PC-9 (cell line): ENCODE measurements at regions of chr12 and their contacts with region 1.

Region 1: GRCh38 chr12:52949413-52950331 is 754 bp downstream of the KRT18 start:
- DNase-seq: peak; percentile 61 to 78
- H3K4me3 ChIP-seq: peak overlapping the region; percentile 94
- H3K27ac ChIP-seq: peak overlapping the region; percentile 95
- H3K4me1 ChIP-seq: peaks cover 41% of the 10 kb centered on the region
- H3K27me3 ChIP-seq: no peaks in the 10 kb centered on the region
- CTCF ChIP-seq: no peak

Region 2: DNA sequence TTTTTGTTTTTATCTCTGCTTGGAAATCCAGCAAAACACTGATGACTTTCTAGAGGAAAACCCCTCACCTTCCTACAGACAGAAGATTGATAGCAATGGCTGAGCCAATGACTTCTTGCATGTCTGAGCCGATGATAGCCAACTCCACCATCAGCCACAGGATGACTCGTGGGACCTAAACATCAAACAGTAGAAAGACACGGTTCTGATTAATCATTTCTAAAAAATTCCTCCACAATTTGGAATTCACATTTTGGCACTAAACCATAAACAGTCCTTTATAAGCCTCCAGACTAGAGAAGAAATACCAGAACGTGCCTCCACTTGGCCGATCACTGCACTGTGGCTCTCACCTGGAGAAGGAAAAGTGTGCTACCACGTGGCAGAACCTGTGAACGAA is 1949.4 kb before region 1 on chr12:
- CTCF ChIA-PET with region 1: no interaction called
- POLR2A ChIA-PET with region 1: no interaction called
- intact Hi-C with region 1: no loop called
- DNase-seq: peak in 1 of 2 experiments; percentile 35
- H3K4me3 ChIP-seq: no peak overlapping the region
- H3K27ac ChIP-seq: no peak overlapping the region
- H3K4me1 ChIP-seq: peaks cover 3% of the 10 kb centered on the region
- H3K27me3 ChIP-seq: no peaks in the 10 kb centered on the region
- CTCF ChIP-seq: no peak

Region 3: GRCh38 chr12:52230327-52231291 is 719.1 kb before region 1 on chr12:
- CTCF ChIA-PET with region 1: no interaction called
- POLR2A ChIA-PET with region 1: interaction called, 4 read pairs
- intact Hi-C with region 1: loop called (anchors 5 kb)
- DNase-seq: peak; percentile 85 to 97
- H3K4me3 ChIP-seq: peak overlapping the region; percentile 96
- H3K27ac ChIP-seq: peak overlapping the region; percentile 97
- H3K4me1 ChIP-seq: peaks cover 65% of the 10 kb centered on the region
- H3K27me3 ChIP-seq: no peaks in the 10 kb centered on the region
- CTCF ChIP-seq: no peak

Region 4: DNA sequence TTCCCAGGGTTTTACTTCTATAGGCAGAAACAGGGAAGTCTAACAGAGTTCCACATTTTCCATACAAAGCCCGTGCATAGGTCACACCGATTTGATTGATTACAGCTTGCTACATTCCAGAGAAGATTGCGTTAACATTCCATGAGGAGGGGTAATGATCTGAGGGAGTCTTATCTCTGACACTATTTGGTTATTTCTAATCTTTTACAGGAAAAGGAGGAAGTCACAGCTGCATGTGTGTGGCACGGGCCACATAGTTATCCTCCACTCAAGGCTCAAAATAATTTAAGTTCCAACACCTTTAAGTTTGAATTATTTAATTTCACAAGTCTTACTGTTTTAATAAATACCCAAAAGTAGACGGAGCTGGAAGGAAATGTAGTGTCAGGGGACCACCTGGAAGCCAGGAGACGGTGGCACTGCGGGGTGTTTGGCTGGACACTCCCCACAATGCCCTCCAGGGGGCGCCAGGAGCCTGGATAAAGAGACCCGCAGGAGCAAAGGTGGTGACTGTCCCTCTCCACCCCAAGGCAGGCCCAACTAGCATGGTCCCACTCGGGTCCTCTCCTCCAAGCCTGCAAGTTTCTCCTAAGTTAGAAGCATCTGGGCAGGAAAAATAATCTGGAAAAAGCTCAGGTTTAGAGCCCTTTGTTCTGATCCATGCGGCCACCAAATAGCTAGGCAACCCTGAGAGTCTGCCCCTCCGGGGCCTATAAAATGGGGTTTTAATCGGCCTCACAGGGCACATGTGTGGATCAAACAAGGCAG is 65.0 kb before region 1 on chr12:
- CTCF ChIA-PET with region 1: interaction called, 4 read pairs
- POLR2A ChIA-PET with region 1: interaction called, 11 read pairs
- intact Hi-C with region 1: no loop called
- DNase-seq: peak in 1 of 2 experiments; percentile 76
- H3K4me3 ChIP-seq: no peak overlapping the region
- H3K27ac ChIP-seq: no peak overlapping the region
- H3K4me1 ChIP-seq: peaks cover 6% of the 10 kb centered on the region
- H3K27me3 ChIP-seq: no peaks in the 10 kb centered on the region
- CTCF ChIP-seq: peak; percentile 97

Region 5: GRCh38 chr12:52903285-52903854 is 46.3 kb before region 1 on chr12:
- CTCF ChIA-PET with region 1: interaction called, 3 read pairs
- POLR2A ChIA-PET with region 1: interaction called, 111 read pairs
- intact Hi-C with region 1: loop called (anchors 1 kb)
- DNase-seq: no peak
- H3K4me3 ChIP-seq: peak overlapping the region; percentile 97
- H3K27ac ChIP-seq: peak overlapping the region; percentile 93
- H3K4me1 ChIP-seq: peaks cover 69% of the 10 kb centered on the region
- H3K27me3 ChIP-seq: no peaks in the 10 kb centered on the region
- CTCF ChIP-seq: no peak

Region 6: GRCh38 chr12:52969828-52970569 is 20.3 kb after region 1 on chr12:
- CTCF ChIA-PET with region 1: no interaction called
- POLR2A ChIA-PET with region 1: interaction called, 48 read pairs
- intact Hi-C with region 1: loop called (anchors 1 kb)
- DNase-seq: peak; percentile 90 to 98
- H3K4me3 ChIP-seq: peak overlapping the region; percentile 28; the same call in 1 of the 2 replicates
- H3K27ac ChIP-seq: peak overlapping the region; percentile 99
- H3K4me1 ChIP-seq: peaks cover 67% of the 10 kb centered on the region
- H3K27me3 ChIP-seq: no peaks in the 10 kb centered on the region
- CTCF ChIP-seq: no peak

Region 7: DNA sequence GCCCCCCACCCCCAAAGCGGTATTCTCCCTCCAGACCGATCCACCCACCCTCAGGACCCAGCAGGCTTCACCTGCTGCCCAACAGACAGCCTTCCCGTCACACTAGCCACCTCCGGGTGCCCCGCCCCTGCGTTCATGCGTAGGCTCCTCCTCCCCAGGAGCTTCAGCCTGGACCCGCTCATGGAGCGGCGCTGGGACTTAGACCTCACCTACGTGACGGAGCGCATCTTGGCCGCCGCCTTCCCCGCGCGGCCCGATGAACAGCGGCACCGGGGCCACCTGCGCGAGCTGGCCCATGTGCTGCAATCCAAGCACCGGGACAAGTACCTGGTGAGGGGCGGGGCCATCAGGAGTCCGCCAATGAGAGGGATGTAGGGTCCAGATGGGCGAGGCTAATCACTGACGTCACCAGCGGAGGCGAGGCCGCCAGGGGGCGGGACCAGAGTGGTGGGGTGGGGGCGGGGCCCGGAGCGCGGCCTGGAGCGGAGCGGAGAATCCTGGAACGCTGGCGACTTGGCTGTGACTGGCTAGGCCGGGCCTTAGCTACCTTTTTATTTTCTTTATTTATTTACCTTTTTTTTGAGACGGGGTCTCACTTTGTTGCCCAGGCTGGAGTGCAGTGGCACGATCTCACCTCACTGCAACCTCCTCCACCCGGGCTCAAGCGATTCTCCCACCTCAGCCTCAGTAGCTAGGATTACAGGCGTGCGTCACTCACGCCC is 104.6 kb after region 1 on chr12:
- CTCF ChIA-PET with region 1: no interaction called
- POLR2A ChIA-PET with region 1: interaction called, 30 read pairs
- intact Hi-C with region 1: no loop called
- DNase-seq: peak; percentile 87 to 94
- H3K4me3 ChIP-seq: peak overlapping the region; percentile 95
- H3K27ac ChIP-seq: peak overlapping the region; percentile 71
- H3K4me1 ChIP-seq: peaks cover 19% of the 10 kb centered on the region
- H3K27me3 ChIP-seq: no peaks in the 10 kb centered on the region
- CTCF ChIP-seq: no peak

Region 8: GRCh38 chr12:53102883-53103807 is 153.5 kb after region 1 on chr12 and contains the start of gene SOAT2:
- CTCF ChIA-PET with region 1: no interaction called
- POLR2A ChIA-PET with region 1: no interaction called
- intact Hi-C with region 1: no loop called
- DNase-seq: no peak
- H3K4me3 ChIP-seq: no peak within 1 kb of the TSS
- H3K27ac ChIP-seq: no peak within 1 kb of the TSS
- H3K4me1 ChIP-seq: peaks cover 11% of the 10 kb centered on the region
- H3K27me3 ChIP-seq: no peaks in the 10 kb centered on the region
- CTCF ChIP-seq: no peak
- total RNA-seq, gene SOAT2: 0.70 and 0.79 TPM in 2 replicates